IMR-90 (cell line): ENCODE measurements at regions of chr3 and their contacts with region 1.

Region 1: DNA sequence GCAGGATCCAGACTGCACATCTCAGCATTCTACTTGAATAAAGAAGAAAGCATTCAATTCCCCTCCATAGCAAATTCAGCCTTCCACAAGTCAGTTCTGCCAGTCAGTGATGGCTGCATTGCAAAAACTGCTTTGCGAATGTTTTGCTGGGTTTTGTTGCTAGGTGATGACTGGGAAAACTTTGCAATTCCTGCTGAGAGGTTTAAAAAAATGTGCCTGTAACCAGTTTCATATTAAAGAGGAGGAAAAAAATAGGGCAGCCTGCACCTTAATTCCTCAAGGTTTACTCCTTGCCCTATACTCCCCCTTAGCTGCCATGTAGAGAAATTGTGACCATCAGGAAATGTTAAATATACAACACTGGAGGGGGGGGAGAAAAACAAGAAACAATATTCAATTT is 225.6 kb upstream of the ATP11B start:
- DNase-seq: no peak
- ATAC-seq: no peak
- H3K4me3 ChIP-seq: no peak overlapping the region
- H3K27ac ChIP-seq: no peak overlapping the region
- H3K4me1 ChIP-seq: no peaks in the 10 kb centered on the region
- H3K27me3 ChIP-seq: no peaks in the 10 kb centered on the region
- CTCF ChIP-seq: no peak
- POLR2A ChIP-seq: no peak
- RAD21 ChIP-seq: no peak

Region 2: DNA sequence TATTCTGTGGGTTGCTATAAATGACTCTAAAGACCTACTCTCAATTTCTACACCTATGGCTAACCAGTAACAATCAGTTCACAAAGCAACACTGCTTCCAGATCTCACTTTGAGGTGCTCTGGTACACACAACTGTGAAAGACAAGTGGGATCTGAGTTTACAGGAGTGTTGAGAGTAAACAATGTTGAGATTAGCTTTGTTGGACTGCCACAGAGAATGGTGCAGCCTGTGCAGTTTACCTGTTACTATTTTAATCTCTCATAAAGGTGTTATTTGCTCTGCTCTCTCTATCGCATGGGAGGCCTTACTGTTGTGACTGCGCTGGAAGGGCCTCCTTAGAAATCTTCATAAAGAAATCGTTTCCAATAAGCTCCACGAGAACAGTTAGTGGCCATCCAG is 744.0 kb before region 1 on chr3:
- CTCF ChIA-PET with region 1: no interaction called
- POLR2A ChIA-PET with region 1: no interaction called
- dilution Hi-C with region 1: no loop called
- in situ Hi-C with region 1: no loop called
- intact Hi-C with region 1: loop called (anchors 10 kb)
- DNase-seq: no peak
- ATAC-seq: no peak
- H3K4me3 ChIP-seq: no peak overlapping the region
- H3K27ac ChIP-seq: no peak overlapping the region
- H3K4me1 ChIP-seq: no peaks in the 10 kb centered on the region
- H3K27me3 ChIP-seq: no peaks in the 10 kb centered on the region
- CTCF ChIP-seq: no peak
- POLR2A ChIP-seq: no peak
- RAD21 ChIP-seq: no peak

Region 3: GRCh38 chr3:182508916-182509711 is 58.6 kb before region 1 on chr3:
- CTCF ChIA-PET with region 1: no interaction called
- POLR2A ChIA-PET with region 1: no interaction called
- dilution Hi-C with region 1: no loop called
- in situ Hi-C with region 1: no loop called
- intact Hi-C with region 1: no loop called
- DNase-seq: no peak
- ATAC-seq: no peak
- H3K4me3 ChIP-seq: no peak overlapping the region
- H3K27ac ChIP-seq: no peak overlapping the region
- H3K4me1 ChIP-seq: no peaks in the 10 kb centered on the region
- H3K27me3 ChIP-seq: no peaks in the 10 kb centered on the region
- CTCF ChIP-seq: no peak
- POLR2A ChIP-seq: no peak
- RAD21 ChIP-seq: no peak